Caco-2 (cell line): ENCODE measurements at regions of chr12 and their contacts with region 1.

Region 1: DNA sequence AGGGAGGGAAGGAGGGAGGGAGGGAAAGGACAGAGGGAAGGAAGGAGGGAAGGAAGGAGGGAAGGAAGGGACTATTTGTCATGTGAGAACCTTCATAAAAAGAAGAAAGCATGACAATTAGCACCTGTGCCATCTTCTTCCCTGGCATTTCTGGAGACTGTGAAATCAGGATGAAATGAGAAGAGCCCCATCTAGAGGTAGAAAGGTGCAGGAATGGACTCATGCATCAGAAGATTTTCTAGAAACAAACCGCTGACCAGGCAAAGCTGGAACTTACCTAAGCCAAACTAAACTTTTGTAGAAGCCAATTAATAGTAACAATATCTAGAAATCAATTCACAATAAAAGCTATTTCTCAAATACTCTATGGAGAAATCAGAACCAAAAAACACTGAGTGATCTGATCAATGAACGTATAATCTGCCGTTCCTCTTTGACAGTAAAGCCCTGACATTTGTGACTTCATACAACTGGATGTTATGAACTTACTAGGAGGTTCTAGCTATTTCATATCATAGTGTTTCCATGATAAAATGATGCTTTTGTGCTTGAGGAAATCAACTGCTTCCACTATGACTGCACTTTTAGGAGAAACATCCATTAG is 24.4 kb upstream of the CRACR2A start:
- DNase-seq: peak in 1 of 2 experiments; percentile 59
- H3K4me3 ChIP-seq: no peak overlapping the region
- H3K4me3 Mint-ChIP-seq: no peak overlapping the region
- H3K27ac Mint-ChIP-seq: no peak overlapping the region
- H3K4me1 ChIP-seq: no peaks in the 10 kb centered on the region
- H3K4me1 Mint-ChIP-seq: no peaks in the 10 kb centered on the region
- H3K27me3 ChIP-seq: 0 out of 2 replicates have a peak, but pooled peaks cover 1% of the 10 kb centered on the region
- H3K27me3 Mint-ChIP-seq: peaks cover 13% of the 10 kb centered on the region
- CTCF ChIP-seq: peak; percentile 80 to 82

Region 2: DNA sequence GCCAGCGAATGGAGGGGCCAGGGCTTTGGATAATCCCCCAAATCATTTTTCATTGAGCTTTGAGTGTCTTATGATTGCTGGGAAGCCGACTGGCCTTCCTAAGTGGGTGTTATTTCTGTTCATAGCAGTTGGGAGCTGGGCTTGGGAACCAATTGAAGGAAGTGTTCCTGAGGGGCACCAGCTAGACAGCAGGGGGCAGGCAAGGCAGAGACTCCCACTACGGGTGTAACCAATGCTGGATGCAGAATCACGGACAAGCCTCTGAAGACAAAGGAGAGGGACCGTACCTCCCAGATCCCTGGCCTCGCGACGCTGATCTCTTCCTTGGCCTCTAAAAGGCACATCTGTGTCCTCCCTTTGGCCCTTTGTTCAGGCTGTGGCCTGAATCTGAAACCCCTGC is 435.3 kb before region 1 on chr12:
- CTCF ChIA-PET with region 1: no interaction called
- POLR2A ChIA-PET with region 1: no interaction called
- intact Hi-C with region 1: loop called (anchors 1 kb)
- DNase-seq: peak; percentile 61
- H3K4me3 ChIP-seq: no peak overlapping the region
- H3K4me3 Mint-ChIP-seq: no peak overlapping the region
- H3K27ac Mint-ChIP-seq: no peak overlapping the region
- H3K4me1 ChIP-seq: no peaks in the 10 kb centered on the region
- H3K4me1 Mint-ChIP-seq: no peaks in the 10 kb centered on the region
- H3K27me3 ChIP-seq: 0 out of 2 replicates have a peak, but pooled peaks cover 1% of the 10 kb centered on the region
- H3K27me3 Mint-ChIP-seq: peaks cover 23% of the 10 kb centered on the region
- CTCF ChIP-seq: peak; percentile 54 to 75

Region 3: GRCh38 chr12:3491938-3492792 is 285.1 kb before region 1 on chr12:
- CTCF ChIA-PET with region 1: no interaction called
- POLR2A ChIA-PET with region 1: no interaction called
- intact Hi-C with region 1: loop called (anchors 10 kb)
- DNase-seq: peak; percentile 61 to 86
- H3K4me3 ChIP-seq: no peak overlapping the region
- H3K4me3 Mint-ChIP-seq: no peak overlapping the region
- H3K27ac Mint-ChIP-seq: no peak overlapping the region
- H3K4me1 ChIP-seq: peaks cover 4% of the 10 kb centered on the region; the same call in 1 of the 2 replicates
- H3K4me1 Mint-ChIP-seq: no peaks in the 10 kb centered on the region
- H3K27me3 ChIP-seq: peaks cover 7% of the 10 kb centered on the region
- H3K27me3 Mint-ChIP-seq: peaks cover 41% of the 10 kb centered on the region
- CTCF ChIP-seq: no peak

Region 4: DNA sequence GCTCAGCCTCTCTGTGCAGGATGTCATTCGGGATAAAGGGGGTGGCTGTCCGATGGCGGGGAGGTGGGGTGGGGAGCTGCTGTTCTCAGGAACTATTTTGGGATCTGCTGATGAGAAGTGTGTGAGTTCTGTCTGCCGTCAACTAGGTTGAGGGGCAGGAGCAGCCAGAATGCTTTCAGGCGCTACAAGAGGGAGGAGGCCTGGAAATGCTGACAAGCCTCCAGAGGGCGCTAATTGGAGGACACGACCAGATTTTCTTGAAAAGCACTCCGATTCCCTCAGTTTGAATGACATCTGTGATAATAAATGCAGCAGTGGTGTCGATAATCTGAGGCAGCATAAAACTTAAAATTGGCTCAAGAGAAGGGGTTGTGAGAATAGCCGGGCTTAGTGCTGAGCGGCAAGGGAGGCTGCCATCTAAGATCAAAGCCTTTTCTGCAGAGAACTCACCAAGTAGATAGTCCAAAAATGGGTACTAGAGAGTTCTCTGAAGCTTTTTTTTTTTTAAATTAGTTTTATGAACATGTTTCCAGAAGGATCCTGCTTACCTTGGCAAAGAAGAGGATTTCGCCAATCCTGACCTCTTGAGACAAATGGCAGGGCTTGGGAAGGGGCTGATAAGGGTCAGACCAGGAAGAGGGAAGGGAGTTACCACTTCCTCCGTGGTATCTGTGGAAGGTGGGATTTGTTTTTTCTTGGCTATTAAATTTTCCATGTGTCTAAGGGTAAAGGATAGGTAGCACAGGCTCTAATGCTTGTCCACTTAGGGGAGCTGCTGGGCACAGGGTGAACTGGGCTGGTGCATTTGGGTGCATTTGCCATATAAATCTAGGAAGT is 118.8 kb before region 1 on chr12:
- CTCF ChIA-PET with region 1: interaction called, 4 read pairs
- POLR2A ChIA-PET with region 1: no interaction called
- intact Hi-C with region 1: loop called (anchors 1 kb)
- DNase-seq: peak in 1 of 2 experiments; percentile 61
- H3K4me3 ChIP-seq: no peak overlapping the region
- H3K4me3 Mint-ChIP-seq: no peak overlapping the region
- H3K27ac Mint-ChIP-seq: no peak overlapping the region
- H3K4me1 ChIP-seq: no peaks in the 10 kb centered on the region
- H3K4me1 Mint-ChIP-seq: peaks cover 6% of the 10 kb centered on the region
- H3K27me3 ChIP-seq: no peaks in the 10 kb centered on the region
- H3K27me3 Mint-ChIP-seq: no peaks in the 10 kb centered on the region
- CTCF ChIP-seq: peak in 1 of 2 experiments; percentile 64